ENCODE measurements at regions of chr5 and their contacts with region 1.

Region 1: DNA sequence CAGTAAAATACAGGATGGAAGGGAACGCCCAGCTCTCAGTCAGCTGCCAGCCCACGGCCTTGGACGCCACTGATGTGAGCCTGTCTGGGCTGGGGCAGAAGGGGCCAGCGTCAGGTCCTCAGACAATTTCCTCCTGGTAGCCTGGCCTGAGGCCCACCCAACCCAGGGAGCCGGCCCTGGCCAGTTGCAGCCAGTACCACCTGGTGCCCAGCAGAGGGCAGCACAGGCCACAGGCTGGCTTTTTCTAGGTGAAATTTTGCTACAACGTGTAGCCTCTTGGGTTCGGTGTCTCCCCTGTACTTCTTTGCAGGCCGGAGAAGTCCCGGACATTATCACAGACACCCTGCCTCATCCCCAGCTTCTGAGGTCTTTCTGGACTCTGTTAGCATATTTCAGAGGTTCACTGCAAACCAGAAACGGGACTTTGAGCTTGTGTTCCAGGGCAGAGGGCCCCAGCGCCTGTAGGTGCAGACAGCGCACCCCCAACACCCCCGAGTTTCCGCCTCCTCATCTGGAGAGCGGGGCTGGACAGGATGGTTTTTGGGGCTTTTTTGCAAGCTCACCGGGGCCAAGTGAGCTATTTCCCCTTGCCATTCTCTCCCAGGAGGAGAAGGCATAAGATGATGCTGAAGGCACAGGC is 45.9 kb upstream of the KCNMB1 start:
- H3K4me3 ChIP-seq: no peak overlapping the region
- H3K27ac ChIP-seq: no peak overlapping the region
- H3K4me1 ChIP-seq: no peaks in the 10 kb centered on the region
- CTCF ChIP-seq: peak; percentile 82

Region 2: DNA sequence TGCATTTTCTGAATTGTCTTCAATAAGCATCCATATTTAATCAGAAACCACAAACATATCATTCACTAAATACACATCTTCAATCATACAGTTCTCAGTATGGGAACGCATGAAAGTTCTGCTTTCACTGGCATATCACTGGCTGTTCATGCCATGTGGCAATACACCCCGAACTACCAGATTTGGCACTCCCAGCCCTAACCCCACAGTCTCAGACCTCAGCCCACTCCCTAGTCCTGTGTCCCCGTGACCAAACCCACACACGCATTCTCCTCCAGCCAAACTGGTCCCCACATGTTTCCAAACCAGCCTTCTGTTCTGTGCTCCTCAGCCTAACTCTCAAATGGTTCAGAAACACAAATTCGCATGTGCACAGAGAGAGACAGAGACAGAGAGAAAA is 66.5 kb before region 1 on chr5:
- CTCF ChIA-PET with region 1: no interaction called
- POLR2A ChIA-PET with region 1: no interaction called
- H3K4me3 ChIP-seq: no peak overlapping the region
- H3K27ac ChIP-seq: no peak overlapping the region
- H3K4me1 ChIP-seq: no peaks in the 10 kb centered on the region
- CTCF ChIP-seq: no peak

Region 3: DNA sequence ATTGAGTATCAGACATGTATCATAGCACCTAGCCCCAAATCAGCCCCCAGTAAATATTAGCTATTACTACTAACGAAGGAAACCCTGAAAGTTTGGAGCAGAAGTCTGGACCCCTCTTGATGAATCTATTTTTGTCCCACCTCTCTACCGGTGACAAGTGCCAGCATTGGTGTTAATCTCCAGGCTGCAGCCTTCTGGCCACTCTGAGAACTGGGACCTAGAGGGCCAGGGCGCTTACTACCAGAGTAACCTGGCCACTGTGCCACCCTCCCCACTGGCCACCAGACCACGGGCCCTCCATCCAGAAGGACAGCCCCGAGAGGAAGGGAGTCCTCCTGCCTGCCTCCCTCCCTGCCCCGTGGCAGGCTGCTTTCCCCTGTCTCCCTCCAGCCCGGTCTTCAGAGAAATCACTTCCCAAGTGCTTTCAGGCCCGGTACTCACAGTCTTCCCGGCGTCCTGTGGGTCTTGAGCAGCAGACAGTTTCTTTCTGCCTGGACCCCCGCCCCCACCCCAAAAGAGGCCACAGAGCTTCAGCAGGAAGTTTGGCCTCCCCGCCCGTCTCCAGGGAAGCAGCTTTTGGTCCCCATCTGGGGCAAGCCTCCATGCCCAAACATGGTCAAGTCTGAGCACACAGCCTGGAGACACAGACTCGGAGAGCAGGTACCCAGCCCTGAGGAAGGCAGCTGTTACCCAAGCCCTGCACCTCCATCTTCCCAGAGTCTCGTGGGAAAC is 46.1 kb before region 1 on chr5 and contains the start of gene KCNMB1:
- CTCF ChIA-PET with region 1: interaction called, 10 read pairs
- POLR2A ChIA-PET with region 1: no interaction called
- H3K4me3 ChIP-seq: no peak within 1 kb of the TSS
- H3K27ac ChIP-seq: no peak within 1 kb of the TSS
- H3K4me1 ChIP-seq: peaks cover 3% of the 10 kb centered on the region; the same call in 1 of the 2 replicates
- CTCF ChIP-seq: no peak

Region 4: GRCh38 chr5:170597109-170597751 is 162.1 kb after region 1 on chr5:
- CTCF ChIA-PET with region 1: interaction called, 14 read pairs
- POLR2A ChIA-PET with region 1: no interaction called
- H3K4me3 ChIP-seq: no peak overlapping the region
- H3K27ac ChIP-seq: no peak overlapping the region
- H3K4me1 ChIP-seq: 0 out of 2 replicates have a peak, but pooled peaks cover 6% of the 10 kb centered on the region
- CTCF ChIP-seq: no peak

Region 5: DNA sequence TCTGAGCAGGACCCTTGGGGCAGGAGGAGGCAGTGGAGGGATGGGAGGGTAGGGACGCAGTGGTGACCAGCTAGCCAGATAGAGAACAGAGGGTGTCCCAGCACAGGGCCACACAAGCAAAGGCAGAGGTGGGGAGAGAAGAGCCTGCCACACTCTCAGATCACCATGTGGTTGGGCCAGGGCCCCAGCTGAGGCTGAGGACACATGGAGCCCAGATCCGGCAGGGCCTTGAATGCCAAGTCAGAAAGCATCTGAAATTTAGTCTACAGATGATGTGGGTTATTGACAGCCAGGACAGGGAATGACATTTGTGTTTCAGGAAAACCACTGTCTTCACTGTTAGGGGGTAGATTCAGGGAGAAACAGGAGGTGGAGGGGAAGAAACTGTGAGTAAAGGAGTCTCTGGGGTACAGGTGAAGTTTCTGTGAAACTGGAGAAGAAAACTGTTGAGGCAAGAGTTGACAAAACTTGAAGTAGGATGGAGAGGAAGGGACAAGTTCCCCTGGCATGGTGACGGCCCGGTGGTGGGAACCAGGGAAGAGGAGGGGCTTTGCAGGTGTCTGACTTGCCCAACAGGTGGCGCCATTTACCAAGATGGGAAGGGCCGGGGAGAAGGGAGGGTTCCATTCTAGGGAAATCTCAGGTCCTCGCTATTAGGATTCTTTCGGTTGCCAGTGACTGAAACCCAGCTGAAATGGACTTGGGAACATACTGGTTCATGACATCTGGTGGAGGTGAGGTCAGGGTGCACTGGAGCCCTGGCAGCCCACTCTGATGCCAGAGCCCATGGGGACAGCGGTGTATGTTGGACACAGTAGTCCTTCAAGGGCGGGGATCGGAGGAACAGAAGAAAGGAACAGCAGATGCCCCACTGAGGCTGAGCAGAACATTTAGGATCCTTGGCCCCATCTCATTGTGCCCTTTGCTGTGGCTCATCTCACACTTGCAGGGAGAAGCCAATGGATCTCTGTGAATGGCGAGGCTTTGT is 168.8 kb after region 1 on chr5:
- CTCF ChIA-PET with region 1: interaction called, 14 read pairs
- POLR2A ChIA-PET with region 1: no interaction called
- H3K4me3 ChIP-seq: no peak overlapping the region
- H3K27ac ChIP-seq: no peak overlapping the region
- H3K4me1 ChIP-seq: no peaks in the 10 kb centered on the region
- CTCF ChIP-seq: peak; percentile 67; the same call in 1 of the 2 replicates

Region 6: GRCh38 chr5:170614720-170615119 is 179.6 kb after region 1 on chr5:
- CTCF ChIA-PET with region 1: interaction called, 12 read pairs
- POLR2A ChIA-PET with region 1: no interaction called
- H3K4me3 ChIP-seq: no peak overlapping the region
- H3K27ac ChIP-seq: no peak overlapping the region
- H3K4me1 ChIP-seq: no peaks in the 10 kb centered on the region
- CTCF ChIP-seq: no peak

Region 7: DNA sequence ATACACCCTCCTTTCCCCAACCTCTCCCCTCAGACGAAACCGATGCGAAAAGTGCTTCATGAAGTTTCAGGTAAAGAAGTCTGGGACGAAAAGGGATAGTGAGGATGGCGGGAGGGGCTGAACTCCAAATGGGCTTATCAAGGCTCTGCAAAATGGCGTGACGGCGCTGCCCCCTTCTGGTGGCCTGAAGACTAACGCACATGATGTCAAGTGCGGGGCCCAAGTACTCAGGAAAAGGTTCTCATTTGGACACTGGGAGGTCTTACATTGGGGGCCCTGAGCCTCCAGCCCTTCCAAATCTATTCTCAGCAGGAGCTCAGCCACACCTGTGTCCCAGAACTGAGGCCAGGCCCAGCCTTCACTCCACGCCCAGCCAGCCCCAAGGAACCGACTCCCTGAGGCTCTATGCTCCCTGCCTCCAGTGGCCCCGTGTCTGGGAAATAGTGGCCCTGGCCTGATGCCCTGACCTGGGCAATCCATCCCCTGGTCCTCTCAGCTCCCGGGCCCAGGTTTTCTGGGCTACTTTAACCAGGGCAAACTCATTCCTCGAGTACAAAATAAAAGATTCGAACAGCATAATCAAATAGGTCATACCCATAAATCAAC is 188.6 kb after region 1 on chr5:
- CTCF ChIA-PET with region 1: interaction called, 85 read pairs
- POLR2A ChIA-PET with region 1: no interaction called
- H3K4me3 ChIP-seq: no peak overlapping the region
- H3K27ac ChIP-seq: no peak overlapping the region
- H3K4me1 ChIP-seq: no peaks in the 10 kb centered on the region
- CTCF ChIP-seq: peak; percentile 43; the same call in 1 of the 2 replicates